ENCODE measurements at regions of chr1 and their contacts with region 1.

Region 1: GRCh38 chr1:9317591-9318417 is 25.1 kb downstream of the SPSB1 start:
- DNase-seq: peak in 1 of 2 donors; percentile 53
- H3K4me3 ChIP-seq: peak overlapping the region in 1 of 3 donors; percentile 53
- H3K27ac ChIP-seq: peak overlapping the region; percentile 19 to 82
- H3K4me1 ChIP-seq: no peaks in the 10 kb centered on the region
- H3K27me3 ChIP-seq: no peaks in the 10 kb centered on the region
- CTCF ChIP-seq: no peak
- POLR2A ChIP-seq: no peak

Region 2: GRCh38 chr1:9269078-9269501 is 48.7 kb before region 1 on chr1:
- intact Hi-C with region 1: no loop called
- DNase-seq: no peak
- H3K4me3 ChIP-seq: no peak overlapping the region
- H3K27ac ChIP-seq: no peak overlapping the region
- H3K4me1 ChIP-seq: no peaks in the 10 kb centered on the region
- H3K27me3 ChIP-seq: no peaks in the 10 kb centered on the region
- CTCF ChIP-seq: no peak
- POLR2A ChIP-seq: no peak

Region 3: GRCh38 chr1:10189659-10190058 is 871.9 kb after region 1 on chr1:
- intact Hi-C with region 1: loop called (anchors 5 kb)
- DNase-seq: no peak
- H3K4me3 ChIP-seq: no peak overlapping the region
- H3K27ac ChIP-seq: no peak overlapping the region
- H3K4me1 ChIP-seq: no peaks in the 10 kb centered on the region
- H3K27me3 ChIP-seq: no peaks in the 10 kb centered on the region
- CTCF ChIP-seq: no peak
- POLR2A ChIP-seq: no peak